HEK293 (cell line): ENCODE measurements at regions of chr17 and their contacts with region 1.

Region 1: GRCh38 chr17:46193626-46194392 is 580 bp upstream of the KANSL1 start:
- H3K4me3 ChIP-seq: peak overlapping the region; percentile 87
- H3K27ac ChIP-seq: peak overlapping the region; percentile 99
- H3K4me1 ChIP-seq: peaks cover 33% of the 10 kb centered on the region
- CTCF ChIP-seq: peak; percentile 10

Region 2: DNA sequence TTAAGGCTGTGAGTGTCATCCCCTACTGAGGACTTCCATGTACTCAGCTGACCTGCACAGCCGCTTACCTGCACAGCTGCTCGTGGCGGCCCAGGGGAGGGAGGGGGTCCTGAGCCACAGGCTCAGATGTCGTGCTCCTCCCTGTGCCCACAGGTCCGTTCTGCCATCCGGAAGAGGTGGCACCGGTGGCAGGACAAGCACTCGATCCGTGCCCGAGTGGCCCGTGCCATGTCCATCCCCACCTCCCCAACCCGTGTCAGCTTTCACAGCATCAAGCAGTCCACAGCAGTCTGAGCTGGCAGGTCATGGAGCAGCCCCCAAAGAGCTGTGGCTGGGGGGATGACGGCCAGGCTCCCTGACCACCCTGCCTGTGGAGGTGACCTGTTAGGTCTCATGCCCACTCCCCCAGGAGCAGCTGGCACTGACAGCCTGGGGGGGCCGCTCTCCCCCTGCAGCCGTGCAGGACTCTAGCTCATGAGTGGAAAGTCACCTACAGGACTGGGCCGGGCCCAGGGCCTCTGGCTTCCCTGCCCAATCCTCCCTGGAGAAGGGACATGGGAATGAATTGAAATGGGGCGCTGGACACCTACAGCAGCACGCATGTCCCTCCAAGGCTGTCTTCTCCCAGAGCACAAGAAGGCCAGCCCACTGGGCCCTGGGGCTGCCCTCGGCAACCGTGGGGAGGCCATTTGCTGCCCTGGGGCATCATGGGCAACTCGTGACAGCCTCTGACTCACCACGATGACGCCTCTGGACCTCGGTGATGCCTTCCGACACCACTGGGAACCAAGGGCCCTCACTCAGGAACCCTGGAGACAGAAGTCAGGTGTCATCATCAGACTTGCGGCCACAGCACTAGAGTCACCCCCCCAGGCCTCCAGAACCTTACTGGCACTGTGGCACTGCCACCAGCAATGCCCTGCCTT is 359.1 kb before region 1 on chr17:
- CTCF ChIA-PET with region 1: no interaction called
- POLR2A ChIA-PET with region 1: no interaction called
- H3K4me3 ChIP-seq: no peak overlapping the region
- H3K27ac ChIP-seq: no peak overlapping the region
- H3K4me1 ChIP-seq: no peaks in the 10 kb centered on the region
- CTCF ChIP-seq: no peak

Region 3: GRCh38 chr17:46056800-46057304 is 137.0 kb before region 1 on chr17:
- CTCF ChIA-PET with region 1: interaction called, 13 read pairs
- POLR2A ChIA-PET with region 1: no interaction called
- H3K4me3 ChIP-seq: no peak overlapping the region
- H3K27ac ChIP-seq: no peak overlapping the region
- H3K4me1 ChIP-seq: peaks cover 12% of the 10 kb centered on the region
- CTCF ChIP-seq: no peak

Region 4: DNA sequence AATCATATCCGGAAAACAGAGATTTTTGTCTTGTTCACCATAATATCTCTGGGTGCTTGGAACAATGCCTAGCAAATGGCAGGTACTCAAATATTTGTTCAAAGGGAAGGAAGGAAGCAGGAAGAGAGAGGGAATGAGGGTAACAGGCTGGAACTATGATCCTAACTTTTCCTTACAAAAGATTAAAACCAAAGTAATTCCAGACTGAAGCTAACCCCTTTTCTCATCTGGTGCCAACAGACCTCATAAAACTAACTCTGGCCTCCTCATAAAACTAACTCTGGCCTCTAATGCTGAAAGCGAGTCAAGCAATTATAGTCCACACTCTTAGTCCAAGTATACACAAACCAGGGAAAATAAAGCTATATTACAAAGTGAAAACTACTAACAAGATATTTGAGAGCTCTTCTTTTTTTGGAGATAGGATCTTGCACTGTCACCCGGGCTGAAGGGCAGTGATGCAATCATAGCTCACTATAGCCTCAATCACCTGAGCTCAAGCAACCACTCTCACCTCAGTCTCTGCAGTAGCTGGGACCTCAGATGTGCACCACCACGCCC is 85.2 kb before region 1 on chr17:
- CTCF ChIA-PET with region 1: interaction called, 22 read pairs
- POLR2A ChIA-PET with region 1: no interaction called
- H3K4me3 ChIP-seq: no peak overlapping the region
- H3K27ac ChIP-seq: 0 out of 2 replicates have a peak overlapping the region, but pooled peaks have one; percentile 6
- H3K4me1 ChIP-seq: peaks cover 41% of the 10 kb centered on the region
- CTCF ChIP-seq: no peak

Region 5: GRCh38 chr17:46157443-46158062 is 36.3 kb before region 1 on chr17:
- CTCF ChIA-PET with region 1: interaction called, 19 read pairs
- POLR2A ChIA-PET with region 1: interaction called, 9 read pairs
- H3K4me3 ChIP-seq: no peak overlapping the region
- H3K27ac ChIP-seq: peak overlapping the region; percentile 6; the same call in 1 of the 2 replicates
- H3K4me1 ChIP-seq: peaks cover 77% of the 10 kb centered on the region
- CTCF ChIP-seq: no peak

Region 6: GRCh38 chr17:46212634-46213435 is 19.0 kb after region 1 on chr17:
- CTCF ChIA-PET with region 1: interaction called, 96 read pairs
- POLR2A ChIA-PET with region 1: interaction called, 12 read pairs
- H3K4me3 ChIP-seq: no peak overlapping the region
- H3K27ac ChIP-seq: no peak overlapping the region
- H3K4me1 ChIP-seq: no peaks in the 10 kb centered on the region
- CTCF ChIP-seq: peak; percentile 79